ENCODE measurements at regions of chr3 and their contacts with region 1.

Region 1: GRCh38 chr3:187919048-187919447 is 173.8 kb upstream of the BCL6 start:
- DNase-seq: peak; percentile 77
- H3K4me3 Mint-ChIP-seq: peak overlapping the region; percentile 60
- H3K27ac Mint-ChIP-seq: peak overlapping the region; percentile 94
- H3K4me1 Mint-ChIP-seq: peaks cover 83% of the 10 kb centered on the region
- H3K27me3 Mint-ChIP-seq: no peaks in the 10 kb centered on the region

Region 2: DNA sequence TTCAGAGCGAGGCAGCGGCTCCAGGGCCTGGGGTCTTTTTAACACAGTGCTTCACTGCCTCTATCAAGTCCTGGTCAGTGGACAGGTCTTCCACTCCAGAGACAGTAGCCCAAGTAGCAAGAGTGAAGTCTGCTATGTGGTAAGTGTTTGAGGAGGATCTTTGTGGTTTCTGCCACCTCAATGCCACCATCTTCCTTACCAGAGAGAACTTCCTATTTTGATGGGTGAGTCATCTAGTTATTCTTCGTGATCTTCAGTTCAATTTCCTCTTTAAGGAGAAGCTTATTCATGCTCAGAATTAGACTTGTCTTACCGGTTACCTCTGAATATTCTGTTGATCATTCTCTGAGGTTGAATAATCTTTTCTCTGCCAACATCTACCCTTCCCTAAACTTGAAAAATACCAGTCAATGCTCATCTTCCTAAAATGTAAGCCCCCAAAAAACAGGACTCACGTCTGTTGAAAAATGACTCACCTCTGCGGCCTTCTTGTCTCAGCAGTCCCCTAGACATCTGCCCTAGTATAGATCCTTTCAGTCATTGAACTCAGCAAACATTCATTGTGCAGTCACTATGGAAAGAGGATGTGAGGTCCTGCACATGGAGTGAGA is 141.6 kb before region 1 on chr3:
- CTCF ChIA-PET with region 1: no interaction called
- intact Hi-C with region 1: loop called (anchors 1 kb)
- DNase-seq: peak; percentile 76
- H3K4me3 Mint-ChIP-seq: peak overlapping the region; percentile 48
- H3K27ac Mint-ChIP-seq: peak overlapping the region; percentile 96
- H3K4me1 Mint-ChIP-seq: peaks cover 31% of the 10 kb centered on the region
- H3K27me3 Mint-ChIP-seq: no peaks in the 10 kb centered on the region

Region 3: GRCh38 chr3:187958432-187959003 is 39.5 kb after region 1 on chr3:
- CTCF ChIA-PET with region 1: interaction called, 3 read pairs
- intact Hi-C with region 1: loop called (anchors 1 kb)
- DNase-seq: peak; percentile 65
- H3K4me3 Mint-ChIP-seq: peak overlapping the region; percentile 46
- H3K27ac Mint-ChIP-seq: peak overlapping the region; percentile 5
- H3K4me1 Mint-ChIP-seq: peaks cover 18% of the 10 kb centered on the region
- H3K27me3 Mint-ChIP-seq: no peaks in the 10 kb centered on the region

Region 4: DNA sequence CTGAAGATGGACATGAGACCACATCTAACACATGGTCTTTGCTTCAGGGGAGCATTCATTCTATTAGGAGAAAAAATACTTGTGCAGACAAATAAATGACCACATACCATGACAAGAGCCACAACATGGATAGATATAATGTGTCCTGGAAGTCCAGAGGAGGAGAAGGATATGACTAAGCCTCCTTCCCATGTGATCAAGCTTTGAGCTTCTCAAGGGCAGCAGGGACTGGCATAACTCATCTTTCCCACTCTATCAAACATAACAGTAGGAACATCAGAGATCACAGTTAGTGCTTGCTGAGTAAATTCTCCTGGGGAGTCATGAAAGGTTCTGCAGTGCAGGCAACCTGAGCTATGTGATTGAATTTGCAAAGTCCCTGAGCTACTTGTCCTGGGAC is 148.9 kb after region 1 on chr3:
- CTCF ChIA-PET with region 1: no interaction called
- intact Hi-C with region 1: no loop called
- DNase-seq: no peak
- H3K4me3 Mint-ChIP-seq: no peak overlapping the region
- H3K27ac Mint-ChIP-seq: no peak overlapping the region
- H3K4me1 Mint-ChIP-seq: peaks cover 13% of the 10 kb centered on the region
- H3K27me3 Mint-ChIP-seq: no peaks in the 10 kb centered on the region

Region 5: GRCh38 chr3:188154014-188154808 is 235.2 kb after region 1 on chr3 and contains the start of gene LPP:
- CTCF ChIA-PET with region 1: no interaction called
- intact Hi-C with region 1: loop called (anchors 5 kb)
- DNase-seq: peak; percentile 88
- H3K4me3 Mint-ChIP-seq: peak within 1 kb of the TSS; percentile 83
- H3K27ac Mint-ChIP-seq: peak within 1 kb of the TSS; percentile 89
- H3K4me1 Mint-ChIP-seq: peaks cover 54% of the 10 kb centered on the region
- H3K27me3 Mint-ChIP-seq: no peaks in the 10 kb centered on the region
- total RNA-seq, gene LPP: 27.5 to 31.8 TPM

Region 6: DNA sequence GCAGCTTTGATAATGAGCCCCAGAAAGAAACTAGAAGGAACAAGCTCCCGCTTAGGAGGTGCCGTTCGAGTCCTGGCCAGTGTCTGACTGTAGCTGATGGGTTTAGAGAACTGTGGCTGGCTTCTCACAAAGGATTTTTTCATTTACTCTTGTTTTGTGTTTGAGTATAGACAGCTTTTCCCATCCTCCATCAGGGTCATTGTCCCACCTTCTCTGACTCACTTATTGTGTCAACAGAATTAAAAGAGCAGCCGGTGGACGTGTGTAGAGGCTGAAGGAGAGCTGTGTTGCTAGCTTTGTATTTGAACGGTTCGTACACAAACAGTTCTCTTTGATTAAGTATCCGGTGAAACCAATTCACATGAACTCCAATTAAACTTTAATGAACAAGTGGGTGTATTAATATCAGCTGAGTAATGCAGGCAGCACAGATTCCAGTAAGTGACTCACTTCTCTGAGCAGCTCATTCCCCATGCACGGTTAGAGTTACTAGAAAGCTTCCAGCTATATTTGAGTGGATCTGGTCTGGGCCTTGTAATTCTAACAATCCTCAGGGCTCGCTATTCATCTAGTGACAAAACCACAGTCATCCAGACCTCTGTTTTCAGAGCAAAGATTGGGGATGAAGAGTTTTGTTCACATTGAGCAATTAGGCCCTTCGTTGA is 375.9 kb after region 1 on chr3:
- CTCF ChIA-PET with region 1: no interaction called
- intact Hi-C with region 1: loop called (anchors 1 kb)
- DNase-seq: peak; percentile 49
- H3K4me3 Mint-ChIP-seq: no peak overlapping the region
- H3K27ac Mint-ChIP-seq: peak overlapping the region; percentile 69
- H3K4me1 Mint-ChIP-seq: peaks cover 85% of the 10 kb centered on the region
- H3K27me3 Mint-ChIP-seq: no peaks in the 10 kb centered on the region

Region 7: GRCh38 chr3:188584162-188584529 is 665.1 kb after region 1 on chr3:
- CTCF ChIA-PET with region 1: no interaction called
- intact Hi-C with region 1: loop called (anchors 10 kb)
- DNase-seq: peak; percentile 61
- H3K4me3 Mint-ChIP-seq: no peak overlapping the region
- H3K27ac Mint-ChIP-seq: no peak overlapping the region
- H3K4me1 Mint-ChIP-seq: peaks cover 15% of the 10 kb centered on the region
- H3K27me3 Mint-ChIP-seq: no peaks in the 10 kb centered on the region

Region 8: GRCh38 chr3:189167027-189167766 is 1248.1 kb after region 1 on chr3:
- CTCF ChIA-PET with region 1: no interaction called
- intact Hi-C with region 1: no loop called
- DNase-seq: no peak
- H3K4me3 Mint-ChIP-seq: no peak overlapping the region
- H3K27ac Mint-ChIP-seq: no peak overlapping the region
- H3K4me1 Mint-ChIP-seq: peaks cover 14% of the 10 kb centered on the region
- H3K27me3 Mint-ChIP-seq: no peaks in the 10 kb centered on the region

Measured in activated naive CD4-positive, alpha-beta T cell treated with anti-CD3 and anti-CD28 coated beads for 36 hours (primary cell).